ENCODE measurements at regions of chr4 and their contacts with region 1.

Region 1: GRCh38 chr4:172850838-172851237 is 317.8 kb upstream of the GALNT7 start:
- DNase-seq: no peak
- H3K4me3 ChIP-seq: no peak overlapping the region
- H3K27ac ChIP-seq: no peak overlapping the region
- H3K4me1 ChIP-seq: no peaks in the 10 kb centered on the region
- H3K27me3 ChIP-seq: no peaks in the 10 kb centered on the region
- CTCF ChIP-seq: no peak

Region 2: DNA sequence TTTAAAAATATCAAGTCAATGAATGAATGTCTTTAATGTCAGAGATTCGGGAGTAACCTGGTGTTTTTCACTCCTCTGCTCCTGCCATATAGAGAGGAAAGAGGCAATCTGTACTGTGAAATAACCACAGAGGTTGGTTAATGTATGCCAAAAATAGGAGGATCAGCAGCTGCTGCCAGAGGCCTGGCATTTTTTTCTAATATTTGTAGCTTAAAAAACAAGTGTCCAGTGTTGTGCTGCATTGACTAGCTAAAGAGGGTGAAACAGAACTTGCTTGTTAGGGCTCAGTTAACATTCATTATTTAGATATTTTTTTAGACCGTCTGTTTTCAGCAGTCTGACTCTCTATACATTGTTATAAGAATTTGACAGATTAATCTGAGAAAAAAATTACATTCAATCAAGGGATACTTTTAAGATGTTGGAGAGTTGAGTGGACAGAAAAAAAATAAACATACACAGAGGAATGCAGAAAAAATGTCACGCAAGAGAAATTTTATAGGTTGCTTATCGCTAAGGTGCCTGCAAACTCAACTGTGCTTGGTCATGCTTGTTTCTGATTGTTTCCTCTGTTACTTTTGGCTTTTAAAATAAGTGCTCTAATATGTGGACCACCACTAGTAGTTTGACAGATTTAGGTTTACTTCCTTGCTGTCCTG is 74.5 kb before region 1 on chr4:
- CTCF ChIA-PET with region 1: no interaction called
- POLR2A ChIA-PET with region 1: no interaction called
- intact Hi-C with region 1: loop called (anchors 2 kb)
- DNase-seq: no peak
- H3K4me3 ChIP-seq: no peak overlapping the region
- H3K27ac ChIP-seq: no peak overlapping the region
- H3K4me1 ChIP-seq: no peaks in the 10 kb centered on the region
- H3K27me3 ChIP-seq: no peaks in the 10 kb centered on the region
- CTCF ChIP-seq: no peak

Region 3: GRCh38 chr4:172938072-172938829 is 87.4 kb after region 1 on chr4:
- CTCF ChIA-PET with region 1: no interaction called
- POLR2A ChIA-PET with region 1: no interaction called
- intact Hi-C with region 1: no loop called
- DNase-seq: no peak
- H3K4me3 ChIP-seq: no peak overlapping the region
- H3K27ac ChIP-seq: no peak overlapping the region
- H3K4me1 ChIP-seq: no peaks in the 10 kb centered on the region
- H3K27me3 ChIP-seq: no peaks in the 10 kb centered on the region
- CTCF ChIP-seq: no peak

Region 4: GRCh38 chr4:173091362-173091761 is 240.5 kb after region 1 on chr4:
- CTCF ChIA-PET with region 1: no interaction called
- POLR2A ChIA-PET with region 1: no interaction called
- intact Hi-C with region 1: no loop called
- DNase-seq: no peak
- H3K4me3 ChIP-seq: no peak overlapping the region
- H3K27ac ChIP-seq: no peak overlapping the region
- H3K4me1 ChIP-seq: peaks cover 10% of the 10 kb centered on the region; the same call in 1 of the 2 replicates
- H3K27me3 ChIP-seq: no peaks in the 10 kb centered on the region
- CTCF ChIP-seq: no peak